Mammary epithelial cell (primary cell): ENCODE measurements at regions of chr7 and their contacts with region 1.

Region 1: DNA sequence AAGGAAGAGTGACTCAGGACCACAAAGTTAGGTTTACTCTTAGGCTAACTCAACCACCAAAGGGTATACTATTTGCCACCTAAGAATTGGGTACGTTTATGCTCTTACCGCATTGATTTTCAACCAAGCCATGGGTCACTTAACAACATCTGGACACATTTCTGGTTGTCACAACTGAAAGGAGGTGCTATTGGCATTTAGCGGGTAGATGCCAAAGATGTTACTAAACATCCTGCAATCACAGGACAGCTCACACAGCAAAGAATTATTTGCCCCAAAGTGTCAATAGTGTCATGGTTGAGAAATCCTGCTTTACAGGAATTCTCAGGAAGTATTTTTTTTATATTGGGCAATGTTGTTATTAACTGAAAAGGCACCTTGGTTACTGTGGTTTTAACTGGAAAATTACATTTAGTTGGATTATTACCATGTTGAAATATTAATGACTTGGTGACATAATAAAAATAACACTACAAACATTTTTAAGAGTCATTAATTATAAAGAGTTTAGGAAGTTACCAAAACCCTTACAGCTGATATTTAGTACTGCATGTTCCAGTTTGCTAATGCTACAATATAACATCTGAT is 185.0 kb upstream of the TMEM196 start:
- DNase-seq: peak; percentile 97
- H3K4me3 ChIP-seq: no peak overlapping the region
- H3K27ac ChIP-seq: peak overlapping the region; percentile 99
- H3K4me1 ChIP-seq: peaks cover 16% of the 10 kb centered on the region
- H3K27me3 ChIP-seq: no peaks in the 10 kb centered on the region
- CTCF ChIP-seq: no peak

Region 2: GRCh38 chr7:19377611-19378344 is 580.6 kb before region 1 on chr7:
- CTCF ChIA-PET with region 1: no interaction called
- dilution Hi-C with region 1: no loop called
- in situ Hi-C with region 1: no loop called
- intact Hi-C with region 1: no loop called
- DNase-seq: no peak
- H3K4me3 ChIP-seq: no peak overlapping the region
- H3K27ac ChIP-seq: no peak overlapping the region
- H3K4me1 ChIP-seq: no peaks in the 10 kb centered on the region
- H3K27me3 ChIP-seq: peaks cover 2% of the 10 kb centered on the region
- CTCF ChIP-seq: no peak

Region 3: GRCh38 chr7:19852192-19852591 is 106.2 kb before region 1 on chr7:
- CTCF ChIA-PET with region 1: no interaction called
- dilution Hi-C with region 1: no loop called
- in situ Hi-C with region 1: no loop called
- intact Hi-C with region 1: loop called (anchors 10 kb)
- DNase-seq: no peak
- H3K4me3 ChIP-seq: no peak overlapping the region
- H3K27ac ChIP-seq: no peak overlapping the region
- H3K4me1 ChIP-seq: no peaks in the 10 kb centered on the region
- H3K27me3 ChIP-seq: no peaks in the 10 kb centered on the region
- CTCF ChIP-seq: no peak

Region 4: DNA sequence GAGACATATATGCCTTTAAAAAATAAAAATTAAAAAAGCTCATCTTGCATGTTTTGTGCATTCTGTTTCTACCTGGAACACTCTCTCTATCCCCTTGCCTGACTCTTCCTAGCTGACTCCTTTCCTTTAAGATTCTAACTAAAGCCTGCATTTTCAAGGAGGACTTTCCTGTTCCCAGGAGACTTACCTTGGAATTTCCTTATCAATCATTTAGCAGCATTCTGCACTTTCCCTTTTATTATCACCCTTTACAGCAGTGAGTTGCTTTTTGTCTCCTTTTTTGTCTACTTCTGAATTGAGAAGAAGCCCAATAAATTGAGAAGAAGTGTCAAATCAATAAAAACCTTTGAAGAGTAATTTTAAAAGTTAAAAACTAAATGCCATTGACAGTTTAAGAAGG is 42.8 kb before region 1 on chr7:
- CTCF ChIA-PET with region 1: no interaction called
- dilution Hi-C with region 1: no loop called
- in situ Hi-C with region 1: no loop called
- intact Hi-C with region 1: loop called (anchors 2 kb)
- DNase-seq: no peak
- H3K4me3 ChIP-seq: no peak overlapping the region
- H3K27ac ChIP-seq: peak overlapping the region; percentile 7
- H3K4me1 ChIP-seq: peaks cover 9% of the 10 kb centered on the region
- H3K27me3 ChIP-seq: no peaks in the 10 kb centered on the region
- CTCF ChIP-seq: no peak

Region 5: DNA sequence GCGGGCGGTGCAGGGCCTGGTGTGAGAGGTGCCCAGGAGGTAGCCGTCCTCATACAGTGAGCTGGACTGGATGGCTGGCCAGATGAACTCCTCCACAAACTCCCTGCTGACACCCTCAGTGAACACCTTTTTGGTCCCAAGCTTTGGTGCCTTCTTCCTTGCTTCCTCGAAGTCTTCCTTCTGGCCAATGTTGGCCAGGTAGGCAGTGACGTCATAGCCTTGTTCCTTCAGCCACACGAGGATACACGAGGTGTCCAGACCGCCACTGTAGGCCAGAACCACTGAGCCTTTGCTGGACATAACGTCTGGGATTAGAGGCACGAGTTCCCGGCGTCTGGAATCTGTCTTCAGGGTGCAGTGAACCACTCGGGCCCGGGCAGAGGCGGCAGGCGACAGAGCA is 1262.7 kb after region 1 on chr7:
- CTCF ChIA-PET with region 1: no interaction called
- dilution Hi-C with region 1: no loop called
- in situ Hi-C with region 1: no loop called
- intact Hi-C with region 1: no loop called
- DNase-seq: no peak
- H3K4me3 ChIP-seq: no peak overlapping the region
- H3K27ac ChIP-seq: no peak overlapping the region
- H3K4me1 ChIP-seq: no peaks in the 10 kb centered on the region
- H3K27me3 ChIP-seq: no peaks in the 10 kb centered on the region
- CTCF ChIP-seq: no peak